Right lobe of liver (tissue), 6 donors: ENCODE measurements at regions of chr1 and their contacts with region 1.

Region 1: DNA sequence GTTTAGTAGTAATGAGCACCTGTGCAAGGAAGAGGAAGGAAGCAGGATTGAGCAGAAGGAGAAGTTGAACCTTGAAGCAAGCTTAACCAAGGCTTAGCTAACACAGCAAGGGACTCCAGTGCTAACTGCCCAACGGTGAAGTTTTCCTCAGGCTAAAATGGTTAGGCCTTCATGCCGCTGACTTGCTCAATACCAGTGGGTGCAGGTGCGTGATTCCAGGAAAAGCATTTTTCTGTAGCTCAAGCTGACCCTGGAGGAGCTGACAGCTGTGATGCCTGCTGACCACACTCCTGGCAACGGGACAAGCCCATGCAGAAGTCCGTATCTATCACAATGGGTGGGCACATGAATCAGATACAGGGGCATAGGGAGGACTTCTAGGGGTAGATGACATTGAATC is 76.5 kb upstream of the FGGY start:
- DNase-seq: no peak
- ATAC-seq: no peak
- H3K4me3 ChIP-seq: no peak overlapping the region
- H3K27ac ChIP-seq: no peak overlapping the region
- H3K4me1 ChIP-seq: peaks cover 0 to 15% (median 6%) of the 10 kb centered on the region in 4 donors
- H3K27me3 ChIP-seq: no peaks in the 10 kb centered on the region
- CTCF ChIP-seq: no peak
- POLR2A ChIP-seq: no peak

Region 2: GRCh38 chr1:59285691-59286090 is 65.3 kb after region 1 on chr1:
- intact Hi-C with region 1: loop called in 1 of 2 experiments (anchors 5 kb)
- DNase-seq: no peak
- ATAC-seq: no peak
- H3K4me3 ChIP-seq: no peak overlapping the region
- H3K27ac ChIP-seq: no peak overlapping the region
- H3K4me1 ChIP-seq: peaks cover 0 to 8% (median 0%) of the 10 kb centered on the region in 4 donors
- H3K27me3 ChIP-seq: no peaks in the 10 kb centered on the region
- CTCF ChIP-seq: no peak
- POLR2A ChIP-seq: no peak

Region 3: GRCh38 chr1:59393211-59394180 is 173.1 kb after region 1 on chr1:
- intact Hi-C with region 1: no loop called
- DNase-seq: peak; percentile 54 to 74 (median 73)
- ATAC-seq: peak; percentile 88 to 91 (median 89)
- H3K4me3 ChIP-seq: no peak overlapping the region
- H3K27ac ChIP-seq: peak overlapping the region; percentile 60 to 75 (median 65)
- H3K4me1 ChIP-seq: peaks cover 0 to 54% (median 21%) of the 10 kb centered on the region in 4 donors
- H3K27me3 ChIP-seq: no peaks in the 10 kb centered on the region
- CTCF ChIP-seq: no peak
- POLR2A ChIP-seq: no peak